ENCODE measurements at regions of chr2 and their contacts with region 1.

Region 1: DNA sequence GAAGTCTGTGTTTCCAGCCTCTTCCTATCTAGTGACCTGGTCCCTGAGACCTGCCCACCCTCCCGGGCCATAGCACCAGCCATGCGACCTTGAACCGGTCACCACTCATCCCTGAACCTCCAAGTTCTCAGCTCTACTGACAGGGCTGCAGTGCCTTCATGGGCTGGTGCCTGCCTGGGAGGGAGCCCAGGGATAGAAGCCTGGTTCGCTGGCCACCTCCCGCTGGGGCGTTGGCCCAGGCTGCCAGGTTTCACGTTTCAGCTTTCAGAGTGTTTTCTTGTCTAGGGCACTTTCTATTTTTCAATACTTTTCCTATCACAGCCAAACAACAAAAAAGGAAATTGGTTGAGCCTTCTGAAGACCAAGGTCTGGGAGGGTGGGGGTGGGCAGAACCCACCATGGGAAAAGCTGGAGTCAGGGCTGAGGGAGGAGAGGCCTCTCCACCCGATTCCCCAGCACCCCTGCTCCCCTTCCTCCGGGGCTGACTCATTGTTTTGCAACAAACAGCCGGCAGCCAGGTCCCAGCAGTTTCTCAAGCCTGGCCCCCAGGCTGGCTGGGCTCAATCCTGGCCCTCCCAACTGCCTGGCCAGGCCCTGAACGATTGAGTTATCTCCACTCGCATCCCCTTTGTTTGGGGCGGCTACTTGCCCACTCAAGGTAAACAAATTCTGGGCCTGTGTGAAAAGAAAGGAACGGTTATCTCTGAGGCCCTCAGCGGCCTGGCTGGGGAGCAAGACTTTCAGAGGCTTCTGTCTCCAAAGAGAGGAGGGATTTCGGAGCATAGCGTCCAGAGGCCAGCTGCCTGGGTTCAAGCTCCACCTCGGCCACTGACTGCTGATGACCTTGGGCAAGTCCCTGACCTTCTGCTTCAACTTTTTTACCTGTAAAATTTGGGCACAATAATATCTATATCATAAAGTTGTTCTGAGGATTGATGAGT is 47.5 kb downstream of the ZFP36L2 start:
- DNase-seq: peak; percentile 65
- H3K4me3 Mint-ChIP-seq: peak overlapping the region; percentile 33
- H3K27ac Mint-ChIP-seq: peak overlapping the region; percentile 86
- H3K4me1 Mint-ChIP-seq: peaks cover 77% of the 10 kb centered on the region
- H3K27me3 Mint-ChIP-seq: no peaks in the 10 kb centered on the region

Region 2: DNA sequence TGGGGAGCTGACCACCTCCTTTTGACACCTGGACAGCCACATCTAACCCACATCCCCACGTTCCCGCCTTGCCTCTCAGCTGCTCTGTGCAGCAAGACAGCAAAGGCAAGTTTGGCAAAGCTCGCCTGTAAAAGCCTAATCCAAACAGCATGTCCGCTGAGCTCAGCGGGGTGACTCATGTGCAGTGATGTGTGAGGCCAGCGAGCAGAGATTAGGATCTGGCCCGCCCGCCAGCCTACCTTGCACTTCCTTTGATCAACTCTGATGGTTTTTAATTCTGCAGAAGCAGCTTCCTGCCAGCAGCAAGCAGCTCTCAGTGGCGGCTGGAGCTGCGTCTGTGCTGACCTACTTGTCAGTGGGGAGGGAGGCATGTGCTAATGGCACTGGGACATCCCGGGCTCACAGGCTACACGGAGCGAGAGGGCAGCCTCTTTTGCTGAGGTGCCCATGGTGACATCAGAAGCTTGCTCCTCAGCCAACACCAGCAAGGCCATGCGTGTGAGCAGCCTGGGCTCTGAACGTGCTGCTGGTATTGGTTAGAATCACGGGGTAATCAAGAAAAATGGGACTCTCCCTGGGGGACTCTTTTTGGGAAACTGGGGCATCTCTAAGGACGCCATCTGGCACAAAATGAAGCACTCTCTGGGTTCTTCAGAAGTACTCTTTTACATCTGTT is 1045.8 kb before region 1 on chr2:
- CTCF ChIA-PET with region 1: no interaction called
- intact Hi-C with region 1: loop called (anchors 10 kb)
- DNase-seq: peak; percentile 91
- H3K4me3 Mint-ChIP-seq: peak overlapping the region; percentile 72
- H3K27ac Mint-ChIP-seq: peak overlapping the region; percentile 89
- H3K4me1 Mint-ChIP-seq: peaks cover 83% of the 10 kb centered on the region
- H3K27me3 Mint-ChIP-seq: no peaks in the 10 kb centered on the region

Region 3: DNA sequence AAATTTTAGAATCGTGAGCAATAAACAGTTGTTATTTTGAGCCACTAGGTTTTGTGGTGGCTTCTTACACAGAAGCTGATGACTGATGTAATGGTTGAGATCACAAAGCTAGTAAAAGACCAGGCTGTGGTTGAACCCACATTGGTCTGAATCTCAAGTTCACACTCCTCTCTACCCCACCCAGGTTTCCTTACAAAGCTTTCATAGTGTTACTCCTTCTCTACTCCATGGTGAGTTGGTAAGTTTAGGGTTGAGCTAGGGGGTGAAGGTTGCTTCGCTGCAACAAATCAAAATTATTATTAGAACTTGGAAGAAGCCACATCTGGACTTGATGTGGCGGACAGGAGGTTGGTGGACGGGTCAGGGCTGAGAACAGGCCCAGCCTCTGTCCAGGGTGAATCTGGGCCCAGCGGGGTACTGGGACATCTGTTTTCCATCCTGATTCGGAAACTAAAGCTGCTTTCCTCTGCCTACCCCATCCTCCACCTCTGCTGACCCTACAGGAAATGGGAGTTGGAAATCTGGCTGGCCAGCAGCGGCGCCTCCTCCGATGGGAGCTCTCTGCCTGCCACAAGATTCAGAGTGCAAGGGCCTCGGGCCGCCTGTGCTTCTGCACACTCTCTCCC is 38.8 kb before region 1 on chr2:
- CTCF ChIA-PET with region 1: interaction called, 23 read pairs
- intact Hi-C with region 1: loop called (anchors 2 kb)
- DNase-seq: no peak
- H3K4me3 Mint-ChIP-seq: no peak overlapping the region
- H3K27ac Mint-ChIP-seq: peak overlapping the region; percentile 14
- H3K4me1 Mint-ChIP-seq: peaks cover 78% of the 10 kb centered on the region
- H3K27me3 Mint-ChIP-seq: no peaks in the 10 kb centered on the region

Region 4: DNA sequence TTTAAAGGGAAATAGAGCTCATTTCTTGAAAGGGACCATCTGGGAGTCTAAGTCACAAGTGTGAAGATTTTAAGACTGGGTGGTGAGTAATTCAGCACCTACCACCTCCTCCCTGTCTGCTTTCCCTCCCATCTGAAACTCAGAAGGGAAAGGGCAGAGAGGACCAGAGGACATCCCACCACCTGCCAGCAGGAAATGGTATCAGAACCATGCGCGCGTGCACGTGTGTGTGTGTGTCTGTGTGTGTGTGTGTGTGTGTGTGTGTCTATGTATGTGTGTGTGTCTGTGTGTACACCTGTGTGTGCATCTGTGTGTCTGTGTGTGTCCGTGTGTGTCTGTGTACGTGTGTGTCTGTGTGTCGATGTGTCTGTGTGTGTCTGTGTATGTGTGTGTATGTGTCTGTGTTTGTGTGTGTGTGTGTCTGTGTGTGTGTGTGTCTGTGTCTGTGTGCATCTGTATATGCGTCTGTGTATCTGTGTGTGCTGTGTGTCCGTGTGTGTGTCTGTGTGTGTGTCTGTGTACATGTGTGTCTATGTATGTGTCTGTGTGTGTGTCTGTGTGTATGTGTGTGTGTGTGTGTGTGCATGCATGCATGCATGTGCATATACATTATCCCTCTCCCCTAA is 29.3 kb before region 1 on chr2:
- CTCF ChIA-PET with region 1: interaction called, 4 read pairs
- intact Hi-C with region 1: loop called (anchors 1 kb)
- DNase-seq: peak; percentile 90
- H3K4me3 Mint-ChIP-seq: peak overlapping the region; percentile 26
- H3K27ac Mint-ChIP-seq: peak overlapping the region; percentile 62
- H3K4me1 Mint-ChIP-seq: peaks cover 70% of the 10 kb centered on the region
- H3K27me3 Mint-ChIP-seq: no peaks in the 10 kb centered on the region

Region 5: GRCh38 chr2:43158259-43158880 is 20.5 kb before region 1 on chr2:
- CTCF ChIA-PET with region 1: interaction called, 4 read pairs
- intact Hi-C with region 1: loop called (anchors 2 kb)
- DNase-seq: peak; percentile 79
- H3K4me3 Mint-ChIP-seq: peak overlapping the region; percentile 77
- H3K27ac Mint-ChIP-seq: peak overlapping the region; percentile 99
- H3K4me1 Mint-ChIP-seq: peaks cover 72% of the 10 kb centered on the region
- H3K27me3 Mint-ChIP-seq: no peaks in the 10 kb centered on the region

Region 6: GRCh38 chr2:43194121-43194869 is 15.4 kb after region 1 on chr2:
- CTCF ChIA-PET with region 1: interaction called, 8 read pairs
- intact Hi-C with region 1: loop called (anchors 1 kb)
- DNase-seq: no peak
- H3K4me3 Mint-ChIP-seq: peak overlapping the region; percentile 79
- H3K27ac Mint-ChIP-seq: peak overlapping the region; percentile 93
- H3K4me1 Mint-ChIP-seq: peaks cover 57% of the 10 kb centered on the region
- H3K27me3 Mint-ChIP-seq: no peaks in the 10 kb centered on the region

Region 7: DNA sequence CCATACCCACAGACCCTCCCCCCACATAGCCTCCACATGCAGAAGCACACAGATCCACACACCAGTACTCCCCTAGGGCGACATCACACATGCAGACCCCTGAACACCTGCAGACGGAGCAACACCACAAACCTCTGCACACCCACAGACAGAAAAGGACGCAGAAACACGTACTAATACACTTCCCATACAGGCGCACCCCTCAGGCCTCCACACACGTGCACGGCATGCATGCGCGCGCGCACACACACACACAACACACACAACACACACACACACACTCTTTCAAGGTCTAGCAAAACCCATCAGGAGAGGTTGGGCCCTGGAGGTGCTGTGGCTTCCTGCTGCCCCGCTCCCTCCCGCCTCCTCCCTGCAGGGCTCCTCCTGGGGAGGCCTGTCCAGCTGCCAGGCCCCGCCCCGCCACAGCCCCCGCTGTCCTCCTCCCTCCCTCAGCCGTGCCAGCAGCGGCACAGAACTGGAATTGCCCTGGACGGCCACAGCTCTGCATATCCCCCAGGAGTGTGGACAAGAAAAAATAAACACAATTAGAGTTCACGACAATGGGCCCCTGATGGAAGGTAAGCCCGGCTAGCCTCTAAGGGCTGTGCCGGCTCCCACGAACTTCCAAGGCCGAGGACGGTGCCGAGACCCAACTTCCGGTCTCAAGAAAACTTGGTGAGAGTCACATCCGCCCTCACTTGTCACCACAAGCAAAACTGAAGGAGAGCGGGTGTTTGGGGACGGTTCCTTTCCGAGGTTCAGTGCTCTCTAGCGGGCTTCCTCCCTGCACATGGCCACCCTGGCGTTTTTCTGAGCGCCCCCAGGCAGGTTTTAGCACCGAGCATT is 40.7 kb after region 1 on chr2:
- CTCF ChIA-PET with region 1: interaction called, 128 read pairs
- intact Hi-C with region 1: loop called (anchors 1 kb)
- DNase-seq: peak; percentile 89
- H3K4me3 Mint-ChIP-seq: peak overlapping the region; percentile 93
- H3K27ac Mint-ChIP-seq: peak overlapping the region; percentile 98
- H3K4me1 Mint-ChIP-seq: peaks cover 49% of the 10 kb centered on the region
- H3K27me3 Mint-ChIP-seq: no peaks in the 10 kb centered on the region

Measured in activated naive CD4-positive, alpha-beta T cell treated with anti-CD3 and anti-CD28 coated beads for 36 hours (primary cell).